Ovary (tissue), 10 donors: ENCODE measurements at regions of chr6 and their contacts with region 1.

Region 1: DNA sequence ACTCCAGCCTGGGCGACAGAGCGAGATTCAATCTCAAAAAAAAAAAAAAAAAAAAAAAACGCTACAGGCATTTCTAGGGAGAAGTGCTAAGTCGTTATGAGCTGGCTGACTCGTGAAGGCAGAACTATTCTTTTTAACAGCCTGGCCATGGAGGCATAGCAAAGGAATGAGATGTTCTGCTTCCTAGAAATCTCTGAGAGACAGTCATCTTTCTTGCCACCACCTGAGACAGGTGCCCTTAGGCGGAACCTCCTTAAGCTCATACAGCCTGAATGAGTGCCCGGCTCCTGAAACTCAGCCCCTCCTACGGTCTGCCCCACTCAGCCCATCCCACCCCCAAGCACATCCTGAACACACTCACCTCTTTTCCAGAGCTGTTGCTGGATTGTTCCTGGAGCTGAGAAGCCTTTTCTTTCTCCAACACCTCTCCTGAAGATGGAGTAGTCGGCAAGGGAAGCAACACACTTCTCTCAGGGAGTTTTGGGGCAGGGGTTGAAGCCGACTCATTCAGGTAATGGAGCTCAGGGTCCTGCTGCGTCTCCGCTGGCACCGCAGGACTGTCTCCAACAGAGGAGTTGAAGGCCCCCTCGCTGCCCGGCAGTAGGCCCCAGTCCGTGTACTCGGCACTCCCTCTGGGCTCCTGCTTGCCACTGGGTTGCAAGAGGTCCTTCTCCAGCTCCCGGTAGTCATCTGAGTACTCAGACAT is 50.3 kb downstream of the KIAA0319 start:
- DNase-seq: no peak
- H3K4me3 ChIP-seq: no peak overlapping the region
- H3K27ac ChIP-seq: no peak overlapping the region
- H3K4me1 ChIP-seq: no peaks in the 10 kb centered on the region
- H3K27me3 ChIP-seq: no peaks in the 10 kb centered on the region
- CTCF ChIP-seq: no peak
- EP300 ChIP-seq: no peak
- POLR2A ChIP-seq: no peak

Region 2: DNA sequence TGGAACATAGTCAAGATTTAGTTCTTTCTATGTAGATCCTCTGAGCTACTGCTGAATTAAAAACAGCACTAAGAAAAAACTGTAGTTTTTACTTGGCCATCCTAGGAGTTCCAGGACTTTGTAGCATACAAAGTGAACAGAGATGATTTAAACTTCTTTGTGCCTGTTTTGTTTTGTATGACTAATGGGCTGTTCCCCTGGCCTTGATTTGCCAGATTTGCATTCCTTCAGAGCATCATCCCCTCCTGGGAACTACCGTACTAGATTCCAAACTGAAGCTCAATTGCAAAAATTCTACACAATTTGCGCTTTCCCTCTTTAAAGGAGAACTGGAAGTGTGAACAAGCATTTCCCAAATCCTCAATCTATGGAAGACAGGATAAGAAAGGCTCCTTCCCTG is 94.3 kb after region 1 on chr6:
- intact Hi-C with region 1: loop called in 1 of 4 experiments (anchors 10 kb)
- DNase-seq: no peak
- H3K4me3 ChIP-seq: no peak overlapping the region
- H3K27ac ChIP-seq: no peak overlapping the region
- H3K4me1 ChIP-seq: no peaks in the 10 kb centered on the region
- H3K27me3 ChIP-seq: no peaks in the 10 kb centered on the region
- CTCF ChIP-seq: no peak
- EP300 ChIP-seq: no peak
- POLR2A ChIP-seq: no peak